OCI-LY7 (cell line): ENCODE measurements at regions of chr6 and their contacts with region 1.

Region 1: DNA sequence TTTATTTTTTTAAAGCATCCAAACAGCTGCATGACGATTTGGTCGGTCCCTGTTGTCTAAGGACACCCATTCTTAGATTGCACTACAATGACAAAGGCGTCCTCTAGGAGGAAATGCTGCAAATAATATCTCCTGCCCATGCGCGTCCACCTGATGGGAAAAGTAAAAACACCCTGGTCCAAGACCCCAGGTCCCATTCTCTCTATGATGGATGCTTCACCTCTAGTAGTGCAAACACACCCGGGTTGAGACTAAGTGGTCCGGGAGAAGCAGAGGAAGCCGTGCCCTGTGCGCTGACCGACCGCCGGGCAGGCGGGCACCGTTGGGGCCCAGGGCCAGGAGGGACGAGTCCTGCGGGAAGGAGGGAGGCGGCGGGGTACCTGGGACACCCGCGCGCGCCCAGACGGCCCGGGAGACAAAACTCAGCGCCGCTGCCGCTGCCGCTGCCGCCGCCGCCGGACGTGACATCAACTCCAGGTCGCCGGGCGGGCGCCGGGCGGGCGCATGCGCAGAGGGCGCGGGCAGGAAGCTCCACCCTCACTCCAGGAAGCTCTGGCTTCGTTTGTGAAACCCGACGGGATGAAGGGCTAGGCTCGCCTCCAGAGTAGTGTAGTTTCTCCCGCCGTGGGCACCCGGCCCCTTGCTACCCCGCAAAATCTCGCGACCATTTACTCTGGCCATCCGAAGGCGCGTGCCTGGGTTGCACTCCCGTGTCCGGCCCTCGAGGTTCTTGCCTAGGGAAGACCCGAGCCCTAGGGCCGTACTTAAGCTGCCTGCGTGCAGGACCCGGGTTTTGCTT is at the start of gene TBC1D7:
- DNase-seq: peak; percentile 91
- H3K4me3 ChIP-seq: peak within 1 kb of the TSS; percentile 89
- H3K27ac ChIP-seq: peak within 1 kb of the TSS; percentile 61
- H3K4me1 ChIP-seq: peaks cover 30% of the 10 kb centered on the region
- CTCF ChIP-seq: no peak
- total RNA-seq, gene TBC1D7: 52.9 and 69.2 TPM in 2 replicates

Region 2: DNA sequence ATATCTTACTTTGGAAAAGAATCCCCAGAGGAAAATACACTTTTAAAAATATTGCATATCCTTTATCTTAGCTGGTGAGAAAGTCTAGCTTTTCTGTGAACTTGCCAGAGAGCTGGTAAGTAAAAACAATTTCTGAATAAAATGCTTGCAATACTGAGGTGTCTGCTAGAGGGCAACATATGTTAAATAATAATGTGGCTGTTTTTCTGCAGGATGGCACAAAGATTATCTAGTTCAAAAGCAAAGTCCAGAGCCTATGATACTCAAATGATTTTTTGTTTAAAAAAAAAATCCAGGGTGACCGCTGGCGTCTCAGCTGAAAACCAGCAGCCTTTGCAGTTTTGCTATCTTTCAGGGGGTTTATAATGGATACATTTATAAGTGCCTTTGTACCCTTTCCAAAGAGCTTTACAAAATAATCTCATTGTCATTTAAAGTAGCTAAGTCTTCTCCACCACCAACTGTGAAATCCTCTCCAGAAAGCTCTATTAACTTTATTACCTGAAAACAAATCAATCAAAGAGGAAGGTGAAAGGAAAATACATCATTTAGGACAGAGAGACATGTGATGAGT is 416.8 kb before region 1 on chr6:
- CTCF ChIA-PET with region 1: no interaction called
- POLR2A ChIA-PET with region 1: no interaction called
- intact Hi-C with region 1: loop called (anchors 5 kb)
- DNase-seq: peak; percentile 28
- H3K4me3 ChIP-seq: no peak overlapping the region
- H3K27ac ChIP-seq: no peak overlapping the region
- H3K4me1 ChIP-seq: no peaks in the 10 kb centered on the region
- CTCF ChIP-seq: peak; percentile 74

Region 3: GRCh38 chr6:13194852-13195251 is 133.4 kb before region 1 on chr6:
- CTCF ChIA-PET with region 1: interaction called, 10 read pairs
- POLR2A ChIA-PET with region 1: interaction called, 8 read pairs
- intact Hi-C with region 1: loop called (anchors 1 kb)
- DNase-seq: peak; percentile 79
- H3K4me3 ChIP-seq: no peak overlapping the region
- H3K27ac ChIP-seq: no peak overlapping the region
- H3K4me1 ChIP-seq: no peaks in the 10 kb centered on the region
- CTCF ChIP-seq: peak; percentile 88

Region 4: DNA sequence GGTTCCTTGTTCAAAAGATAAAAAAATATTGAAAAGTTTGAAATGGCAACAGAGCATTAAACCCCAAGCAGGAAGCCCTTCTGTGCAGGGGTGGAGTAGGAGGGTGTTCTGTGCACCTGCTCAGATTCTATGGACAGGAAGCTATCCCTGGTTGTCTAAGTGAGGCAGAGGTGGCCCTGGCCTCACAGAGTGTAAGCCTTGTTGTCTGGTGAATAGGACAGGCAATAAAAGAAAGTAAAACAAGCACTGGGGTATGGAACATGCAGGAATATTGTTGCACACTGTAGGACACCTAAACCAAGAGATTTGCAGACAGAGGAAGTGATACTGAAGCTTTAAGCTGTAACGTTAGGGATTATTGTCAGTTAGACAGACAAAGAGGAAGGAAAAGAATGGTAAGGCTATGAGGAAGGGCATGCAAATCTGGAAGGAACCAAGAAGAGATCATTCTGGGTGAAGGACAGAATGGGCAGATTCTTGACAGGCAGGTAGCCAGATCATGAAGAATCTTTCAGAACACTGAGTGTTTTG is 66.7 kb before region 1 on chr6:
- CTCF ChIA-PET with region 1: interaction called, 4 read pairs
- POLR2A ChIA-PET with region 1: interaction called, 16 read pairs
- intact Hi-C with region 1: no loop called
- DNase-seq: peak; percentile 97
- H3K4me3 ChIP-seq: peak overlapping the region; percentile 59
- H3K27ac ChIP-seq: peak overlapping the region; percentile 94
- H3K4me1 ChIP-seq: peaks cover 63% of the 10 kb centered on the region
- CTCF ChIP-seq: no peak

Region 5: GRCh38 chr6:13277836-13278563 is 50.3 kb before region 1 on chr6:
- CTCF ChIA-PET with region 1: no interaction called
- POLR2A ChIA-PET with region 1: interaction called, 26 read pairs
- intact Hi-C with region 1: loop called (anchors 2 kb)
- DNase-seq: peak; percentile 70
- H3K4me3 ChIP-seq: no peak overlapping the region
- H3K27ac ChIP-seq: no peak overlapping the region
- H3K4me1 ChIP-seq: peaks cover 42% of the 10 kb centered on the region
- CTCF ChIP-seq: peak; percentile 86

Region 6: DNA sequence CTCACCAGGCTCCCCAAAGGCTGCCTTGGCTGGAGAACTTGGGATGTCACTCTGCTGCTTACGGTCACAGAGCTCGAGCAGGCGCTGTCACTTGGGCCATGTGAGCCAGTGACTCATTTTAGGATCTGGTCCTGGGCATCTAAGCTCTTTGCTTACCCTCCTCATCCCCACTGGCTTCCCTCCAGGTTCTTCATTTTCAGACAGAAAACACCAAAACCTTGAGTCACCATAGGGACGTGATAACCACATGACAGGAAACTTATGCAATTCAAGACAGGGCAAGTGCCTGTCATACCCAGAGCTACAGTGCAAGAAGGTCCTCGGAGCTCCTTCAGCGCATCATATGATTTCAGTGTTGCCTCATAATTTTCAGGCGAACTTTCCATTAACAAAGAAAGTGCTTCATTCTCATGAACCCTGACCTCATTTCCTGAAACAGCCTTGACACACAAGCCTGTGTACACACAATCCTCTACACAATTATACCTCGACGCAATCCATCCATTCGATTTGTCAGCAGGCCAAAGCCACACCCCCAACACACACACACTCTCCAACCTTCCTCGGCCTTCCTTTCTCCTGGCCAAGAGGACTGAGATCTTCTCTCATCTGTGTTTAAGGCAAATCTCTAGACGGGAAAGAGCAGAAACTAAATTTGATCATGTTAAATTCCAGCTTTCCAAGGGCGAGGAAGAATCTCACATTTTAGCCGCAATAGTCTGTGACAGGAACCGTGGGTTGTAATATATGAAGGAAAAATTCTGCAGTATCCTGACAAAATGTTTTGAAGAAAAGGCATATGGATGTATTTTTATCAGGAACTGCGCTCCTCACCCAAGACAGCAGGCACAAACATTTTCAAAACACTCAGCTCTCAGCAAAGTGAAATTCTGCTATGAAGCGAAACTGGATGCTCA is 25.3 kb before region 1 on chr6:
- CTCF ChIA-PET with region 1: interaction called, 5 read pairs
- POLR2A ChIA-PET with region 1: interaction called, 43 read pairs
- intact Hi-C with region 1: loop called (anchors 2 kb)
- DNase-seq: peak; percentile 33
- H3K4me3 ChIP-seq: peak overlapping the region; percentile 14
- H3K27ac ChIP-seq: peak overlapping the region; percentile 65
- H3K4me1 ChIP-seq: peaks cover 75% of the 10 kb centered on the region
- CTCF ChIP-seq: no peak

Region 7: GRCh38 chr6:13355043-13355951 is 27.0 kb after region 1 on chr6:
- CTCF ChIA-PET with region 1: no interaction called
- POLR2A ChIA-PET with region 1: interaction called, 10 read pairs
- intact Hi-C with region 1: no loop called
- DNase-seq: peak; percentile 45
- H3K4me3 ChIP-seq: peak overlapping the region; percentile 54
- H3K27ac ChIP-seq: peak overlapping the region; percentile 89
- H3K4me1 ChIP-seq: peaks cover 58% of the 10 kb centered on the region
- CTCF ChIP-seq: no peak

Region 8: GRCh38 chr6:13715444-13715883 is 387.2 kb after region 1 on chr6:
- CTCF ChIA-PET with region 1: no interaction called
- POLR2A ChIA-PET with region 1: no interaction called
- intact Hi-C with region 1: no loop called
- DNase-seq: no peak
- H3K4me3 ChIP-seq: no peak overlapping the region
- H3K27ac ChIP-seq: no peak overlapping the region
- H3K4me1 ChIP-seq: peaks cover 11% of the 10 kb centered on the region
- CTCF ChIP-seq: no peak